ENCODE measurements at regions of chr1 and their contacts with region 1.

Region 1: DNA sequence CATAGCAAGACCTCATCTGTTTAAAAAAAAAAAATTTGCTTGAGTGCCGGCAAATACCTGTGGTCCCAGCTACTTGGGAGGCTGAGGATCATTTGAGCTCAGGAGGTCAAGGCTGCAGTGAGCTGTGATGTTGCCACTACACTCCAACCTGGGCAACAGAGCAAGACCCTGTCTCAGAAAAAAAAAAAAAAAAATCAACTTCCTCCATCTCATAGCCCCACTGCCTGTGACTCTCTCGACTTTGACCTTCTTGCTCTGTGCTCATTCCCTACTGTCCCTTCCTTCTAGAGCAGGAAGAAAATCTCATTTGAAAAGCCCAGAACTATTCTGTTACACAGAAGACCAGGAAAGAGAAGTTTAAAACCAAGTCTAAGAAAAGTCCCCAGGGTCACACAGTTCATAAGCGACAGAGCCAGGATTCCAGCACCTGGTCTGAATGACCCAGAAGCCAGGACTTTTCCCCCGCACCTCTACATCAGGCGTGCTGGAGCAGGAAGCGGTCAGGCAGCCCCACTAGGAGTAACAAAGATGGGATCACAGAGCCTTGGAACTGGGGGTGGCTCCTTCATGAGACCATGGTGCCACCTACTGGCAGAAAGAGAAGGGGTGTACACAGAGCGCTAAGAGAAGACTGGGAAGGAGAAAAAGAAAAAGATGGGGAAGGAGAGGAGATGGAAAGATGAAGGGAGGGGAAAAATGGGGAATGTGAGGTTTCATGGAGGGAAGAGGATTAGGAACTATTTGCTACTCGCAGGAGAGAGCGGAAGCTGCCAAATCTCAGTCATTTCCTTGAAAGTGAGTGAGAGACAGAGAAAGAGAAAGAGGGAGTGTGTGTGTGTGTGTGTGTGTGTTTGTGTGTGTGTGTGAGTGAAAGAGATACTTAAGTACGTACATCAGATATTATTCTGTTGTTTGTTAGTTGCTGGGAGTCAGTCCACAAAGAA is 3.1 kb upstream of the P3R3URF start:
- DNase-seq: no peak
- H3K4me3 ChIP-seq: no peak overlapping the region
- H3K27ac ChIP-seq: peak overlapping the region in 3 of 4 donors; percentile 23 to 69 (median 48)
- H3K4me1 ChIP-seq: peaks cover 36 to 67% (median 59%) of the 10 kb centered on the region in 3 donors
- H3K27me3 ChIP-seq: no peaks in the 10 kb centered on the region
- CTCF ChIP-seq: peak; percentile 78 to 96 (median 91)
- POLR2A ChIP-seq: no peak

Region 2: DNA sequence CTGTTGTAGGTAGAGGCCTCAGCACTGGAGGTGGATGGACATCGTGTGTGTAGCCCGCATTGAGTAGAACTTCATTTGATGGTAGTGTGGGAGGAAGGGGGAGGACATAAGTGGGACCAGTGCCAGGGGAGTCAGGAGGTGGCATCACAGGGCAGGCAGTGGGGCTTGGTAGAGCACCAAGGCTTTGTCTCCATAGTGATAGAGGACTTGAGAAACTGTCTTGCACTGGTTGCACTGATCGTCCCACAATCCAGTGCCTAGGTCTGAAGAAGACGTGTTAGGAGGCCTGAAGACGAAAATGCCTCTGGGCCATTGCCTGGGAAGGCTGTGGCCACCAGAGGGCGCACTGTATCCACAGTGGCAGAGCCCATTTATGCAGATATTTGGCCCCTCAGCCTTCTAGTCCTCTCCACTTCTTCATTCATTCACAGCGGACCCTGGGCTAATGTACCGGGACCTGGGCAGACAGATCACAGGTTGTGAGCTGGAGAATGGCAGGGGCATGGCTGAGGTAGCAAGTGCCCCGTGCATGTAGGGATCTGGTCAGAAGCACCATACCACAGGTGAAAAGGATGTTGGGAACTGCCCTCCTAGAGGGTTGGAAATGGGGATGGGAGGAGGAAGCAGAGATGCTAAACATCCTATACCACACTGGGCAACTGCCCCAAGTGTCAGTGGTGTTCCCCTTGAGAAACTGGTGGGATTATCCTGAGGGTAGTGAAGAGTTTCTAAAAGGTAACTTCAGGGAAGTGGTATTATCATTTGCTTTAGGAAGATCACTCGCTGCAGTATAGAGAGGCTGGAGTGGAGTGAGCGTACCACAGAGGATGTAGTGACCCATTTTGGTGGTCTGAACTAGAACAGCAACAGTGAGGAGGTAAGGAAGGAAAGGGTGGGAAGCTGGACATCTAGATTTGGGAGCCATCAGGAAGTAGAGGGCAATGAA is 142.2 kb before region 1 on chr1:
- intact Hi-C with region 1: loop called (anchors 2 kb)
- DNase-seq: peak; percentile 22
- H3K4me3 ChIP-seq: no peak overlapping the region
- H3K27ac ChIP-seq: peak overlapping the region in 2 of 4 donors; percentile 12 to 60
- H3K4me1 ChIP-seq: peaks cover 0 to 42% (median 9%) of the 10 kb centered on the region in 3 donors
- H3K27me3 ChIP-seq: no peaks in the 10 kb centered on the region
- CTCF ChIP-seq: peak; percentile 88 to 100 (median 97)
- POLR2A ChIP-seq: no peak

Region 3: GRCh38 chr1:46223472-46223943 is 44.1 kb after region 1 on chr1:
- intact Hi-C with region 1: loop called (anchors 5 kb)
- DNase-seq: no peak
- H3K4me3 ChIP-seq: no peak overlapping the region
- H3K27ac ChIP-seq: no peak overlapping the region
- H3K4me1 ChIP-seq: peaks cover 0 to 26% (median 5%) of the 10 kb centered on the region in 3 donors
- H3K27me3 ChIP-seq: no peaks in the 10 kb centered on the region
- CTCF ChIP-seq: peak; percentile 56 to 94 (median 94)
- POLR2A ChIP-seq: no peak

Region 4: GRCh38 chr1:46247436-46248121 is 68.2 kb after region 1 on chr1 and contains the start of gene RAD54L:
- intact Hi-C with region 1: no loop called
- DNase-seq: peak; percentile 89
- H3K4me3 ChIP-seq: peak within 1 kb of the TSS; percentile 49 to 84 (median 66)
- H3K27ac ChIP-seq: peak within 1 kb of the TSS; percentile 79 to 88 (median 86)
- H3K4me1 ChIP-seq: peaks cover 4 to 35% (median 7%) of the 10 kb centered on the region in 3 donors
- H3K27me3 ChIP-seq: no peaks in the 10 kb centered on the region
- CTCF ChIP-seq: no peak
- POLR2A ChIP-seq: no peak
- total RNA-seq, gene RAD54L: 1.9 to 7.8 (median 6.8) TPM

Region 5: GRCh38 chr1:46317323-46317722 is 137.9 kb after region 1 on chr1:
- intact Hi-C with region 1: no loop called
- DNase-seq: no peak
- H3K4me3 ChIP-seq: no peak overlapping the region
- H3K27ac ChIP-seq: no peak overlapping the region
- H3K4me1 ChIP-seq: no peaks in the 10 kb centered on the region
- H3K27me3 ChIP-seq: no peaks in the 10 kb centered on the region
- CTCF ChIP-seq: no peak
- POLR2A ChIP-seq: no peak

Measured in esophagus squamous epithelium (tissue), 5 donors.